ENCODE measurements at regions of chr3 and their contacts with region 1.

Region 1: DNA sequence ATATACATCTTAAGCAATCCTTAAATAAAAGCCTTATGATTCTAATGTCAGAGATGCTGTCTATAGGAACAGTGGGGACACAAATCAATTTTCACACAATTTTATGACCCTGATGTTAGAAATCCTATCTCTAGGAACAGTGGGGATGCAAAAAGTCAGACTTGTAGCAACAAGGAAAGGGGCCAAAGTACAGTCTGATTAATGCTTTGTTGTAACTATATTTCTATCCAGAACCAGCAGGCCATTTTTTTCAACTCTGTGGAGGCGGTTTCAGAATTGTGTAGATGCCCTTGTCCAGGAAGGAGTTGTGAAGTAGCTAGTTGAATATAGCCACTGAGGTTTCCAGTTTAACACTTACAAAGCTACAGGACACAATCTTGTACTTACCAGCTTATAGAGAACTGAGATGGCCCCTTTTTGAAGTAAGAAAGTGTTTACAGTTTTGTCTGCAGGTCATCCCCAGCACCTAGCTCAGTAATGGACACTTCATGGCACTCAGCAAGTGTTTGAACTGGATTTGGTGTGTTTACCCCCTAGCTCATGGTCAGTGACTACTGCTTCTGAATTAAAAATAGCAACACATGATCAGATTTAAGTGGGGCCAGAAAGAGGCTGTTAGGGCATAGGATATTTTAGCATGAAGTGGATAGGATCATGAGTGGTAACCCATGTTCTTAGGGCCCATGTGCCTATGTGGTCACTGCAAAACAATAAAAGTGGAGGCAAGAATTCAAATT is 54.3 kb downstream of the RAB7A start:
- DNase-seq: no peak
- H3K4me3 Mint-ChIP-seq: no peak overlapping the region
- H3K27ac Mint-ChIP-seq: no peak overlapping the region
- H3K4me1 Mint-ChIP-seq: peaks cover 28% of the 10 kb centered on the region
- H3K27me3 Mint-ChIP-seq: no peaks in the 10 kb centered on the region
- CTCF ChIP-seq: no peak

Region 2: GRCh38 chr3:128794770-128795649 is 14.7 kb after region 1 on chr3:
- CTCF ChIA-PET with region 1: interaction called, 16 read pairs
- POLR2A ChIA-PET with region 1: interaction called, 4 read pairs
- intact Hi-C with region 1: no loop called
- DNase-seq: peak; percentile 78
- H3K4me3 Mint-ChIP-seq: no peak overlapping the region
- H3K27ac Mint-ChIP-seq: peak overlapping the region; percentile 10
- H3K4me1 Mint-ChIP-seq: peaks cover 17% of the 10 kb centered on the region
- H3K27me3 Mint-ChIP-seq: no peaks in the 10 kb centered on the region
- CTCF ChIP-seq: peak; percentile 78

Region 3: DNA sequence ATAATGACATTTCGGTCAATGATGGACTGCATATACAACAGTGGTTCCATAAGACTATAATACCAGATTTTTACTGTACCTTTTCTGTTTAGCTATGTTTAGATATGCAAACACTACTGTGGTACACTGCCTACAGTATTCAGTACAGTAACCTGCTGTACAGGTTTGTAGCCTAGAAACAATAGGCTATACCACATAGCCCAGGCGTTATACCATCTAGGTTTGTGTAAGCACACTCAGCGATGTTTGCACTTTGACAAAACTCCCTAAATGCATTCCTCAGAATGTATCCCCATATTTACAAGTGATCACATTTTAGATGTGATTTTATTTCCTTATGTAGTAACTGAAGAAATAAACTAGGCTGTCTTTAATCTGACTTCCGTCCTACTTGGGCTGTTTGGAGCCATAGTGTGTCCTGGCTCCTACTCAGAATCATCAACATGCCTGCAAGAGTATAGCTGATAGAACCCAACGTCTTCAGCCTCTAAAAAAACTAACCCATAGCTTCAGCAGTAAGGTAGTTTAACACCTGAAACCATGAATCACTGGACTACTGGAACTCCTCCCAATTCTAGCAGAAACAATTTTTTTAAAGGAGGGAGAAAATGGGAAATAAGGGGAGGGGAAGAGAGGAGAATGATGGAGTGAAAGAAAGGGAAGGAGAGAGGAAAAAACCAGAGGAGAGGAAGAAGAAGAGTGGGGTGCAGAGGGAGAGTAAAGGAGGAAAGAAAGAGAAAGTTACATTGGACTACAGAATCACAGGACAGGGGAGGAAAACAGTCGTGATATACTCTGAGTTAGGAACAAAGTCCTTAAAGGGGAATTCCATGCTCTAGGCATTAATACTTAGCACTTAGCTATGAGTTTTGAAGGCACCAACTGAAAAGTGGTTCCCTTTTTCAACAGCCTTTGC is 893.9 kb after region 1 on chr3:
- CTCF ChIA-PET with region 1: no interaction called
- POLR2A ChIA-PET with region 1: no interaction called
- intact Hi-C with region 1: no loop called
- DNase-seq: no peak
- H3K4me3 Mint-ChIP-seq: peak overlapping the region; percentile 14
- H3K27ac Mint-ChIP-seq: no peak overlapping the region
- H3K4me1 Mint-ChIP-seq: peaks cover 9% of the 10 kb centered on the region
- H3K27me3 Mint-ChIP-seq: no peaks in the 10 kb centered on the region
- CTCF ChIP-seq: no peak

Measured in MCF 10A (cell line).